K562 (cell line): ENCODE measurements at regions of chr11 and their contacts with region 1.

Region 1: DNA sequence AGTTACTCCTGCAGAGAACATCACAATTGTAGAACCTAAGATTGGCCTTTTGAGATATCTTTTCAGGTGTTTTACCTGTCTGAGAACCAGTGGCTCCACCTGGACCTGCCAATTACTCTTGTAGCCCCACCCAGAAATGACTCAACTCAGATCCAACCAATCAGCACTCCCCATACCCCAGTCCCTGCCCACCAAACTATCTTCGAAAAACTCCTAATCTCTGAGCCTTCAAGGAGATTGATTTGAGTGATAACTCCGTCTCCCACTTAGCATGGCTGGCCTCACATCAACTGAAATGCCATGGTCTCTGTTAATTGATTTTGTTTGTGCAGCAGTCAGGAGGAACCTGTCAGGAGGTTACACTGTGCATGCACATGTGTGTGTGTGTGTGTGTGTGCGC is 103.6 kb downstream of the MTNR1B start:
- DNase-seq: no peak
- ATAC-seq: no peak
- H3K4me3 ChIP-seq: no peak overlapping the region
- H3K27ac ChIP-seq: no peak overlapping the region
- H3K4me1 ChIP-seq: no peaks in the 10 kb centered on the region
- H3K27me3 ChIP-seq: no peaks in the 10 kb centered on the region
- CTCF ChIP-seq: no peak
- EP300 ChIP-seq: no peak
- POLR2A ChIP-seq: no peak
- RAD21 ChIP-seq: no peak

Region 2: GRCh38 chr11:93020248-93021046 is 52.6 kb before region 1 on chr11:
- CTCF ChIA-PET with region 1: no interaction called
- POLR2A ChIA-PET with region 1: no interaction called
- in situ Hi-C with region 1: loop called (anchors 5 kb)
- intact Hi-C with region 1: no loop called
- DNase-seq: no peak
- ATAC-seq: no peak
- H3K4me3 ChIP-seq: no peak overlapping the region
- H3K27ac ChIP-seq: no peak overlapping the region
- H3K4me1 ChIP-seq: no peaks in the 10 kb centered on the region
- H3K27me3 ChIP-seq: no peaks in the 10 kb centered on the region
- CTCF ChIP-seq: no peak
- EP300 ChIP-seq: no peak
- POLR2A ChIP-seq: no peak
- RAD21 ChIP-seq: no peak

Region 3: DNA sequence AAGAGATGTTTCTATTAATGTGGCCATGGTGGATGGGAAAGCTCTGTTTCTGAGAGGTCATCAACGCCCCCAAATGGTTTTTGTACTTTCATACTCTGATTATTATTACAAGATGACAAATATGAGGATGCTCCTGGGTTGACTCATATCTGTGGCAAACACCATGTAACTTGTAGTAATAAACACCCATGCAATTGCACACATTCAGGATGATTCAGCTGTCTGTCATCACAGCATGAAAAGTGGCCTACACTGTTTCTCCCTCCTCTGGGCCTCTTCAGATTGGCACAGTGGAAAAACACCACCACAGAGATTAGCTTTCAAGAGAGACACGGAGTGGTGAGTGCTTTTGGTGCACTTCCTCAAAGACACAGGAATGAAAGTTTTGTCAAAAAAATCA is 18.1 kb before region 1 on chr11:
- CTCF ChIA-PET with region 1: no interaction called
- POLR2A ChIA-PET with region 1: no interaction called
- in situ Hi-C with region 1: no loop called
- intact Hi-C with region 1: no loop called
- DNase-seq: peak in 2 of 4 experiments; percentile 10 to 30
- ATAC-seq: peak; percentile 66
- H3K4me3 ChIP-seq: no peak overlapping the region
- H3K27ac ChIP-seq: no peak overlapping the region; the same call in 2 of the 3 replicates
- H3K4me1 ChIP-seq: no peaks in the 10 kb centered on the region; a peak in 1 of 5 replicates
- H3K27me3 ChIP-seq: no peaks in the 10 kb centered on the region
- CTCF ChIP-seq: no peak
- EP300 ChIP-seq: peak; percentile 59
- POLR2A ChIP-seq: no peak
- RAD21 ChIP-seq: no peak

Region 4: GRCh38 chr11:93225662-93226061 is 152.6 kb after region 1 on chr11:
- CTCF ChIA-PET with region 1: no interaction called
- POLR2A ChIA-PET with region 1: no interaction called
- in situ Hi-C with region 1: no loop called
- intact Hi-C with region 1: no loop called
- DNase-seq: peak in 2 of 4 experiments; percentile 9
- ATAC-seq: peak; percentile 38; the same call in 1 of the 3 replicates
- H3K4me3 ChIP-seq: no peak overlapping the region
- H3K27ac ChIP-seq: no peak overlapping the region
- H3K4me1 ChIP-seq: no peaks in the 10 kb centered on the region
- H3K27me3 ChIP-seq: no peaks in the 10 kb centered on the region
- CTCF ChIP-seq: peak in 2 of 3 experiments; percentile 21 to 52; a peak in 2 of 6 replicates
- EP300 ChIP-seq: no peak
- POLR2A ChIP-seq: no peak
- RAD21 ChIP-seq: peak; percentile 68 to 75